ENCODE measurements at regions of chr1 and their contacts with region 1.

Region 1: GRCh38 chr1:228734881-228735801 is at the start of gene RHOU:
- DNase-seq: peak; percentile 70 to 83
- ATAC-seq: peak; percentile 86 to 96 (median 91)
- H3K4me3 ChIP-seq: peak within 1 kb of the TSS; percentile 62 to 91 (median 88)
- H3K27ac ChIP-seq: peak within 1 kb of the TSS; percentile 22 to 97 (median 90)
- H3K4me1 ChIP-seq: peaks cover 0 to 45% (median 14%) of the 10 kb centered on the region in 9 donors
- H3K27me3 ChIP-seq: peaks cover 0 to 12% (median 0%) of the 10 kb centered on the region in 7 donors
- CTCF ChIP-seq: peak; percentile 59 to 98 (median 86)
- total RNA-seq, gene RHOU: 1.00 to 10.8 (median 3.2) TPM

Region 2: GRCh38 chr1:228684607-228685006 is 50.5 kb before region 1 on chr1:
- intact Hi-C with region 1: no loop called
- DNase-seq: peak in 1 of 2 donors; percentile 11
- ATAC-seq: peak in 6 of 8 donors; percentile 6 to 78 (median 42)
- H3K4me3 ChIP-seq: no peak overlapping the region
- H3K27ac ChIP-seq: peak overlapping the region in 5 of 10 donors; percentile 13 to 65 (median 31)
- H3K4me1 ChIP-seq: peaks cover 0 to 14% (median 11%) of the 10 kb centered on the region in 9 donors
- H3K27me3 ChIP-seq: peaks cover 0 to 12% (median 0%) of the 10 kb centered on the region in 7 donors
- CTCF ChIP-seq: no peak

Region 3: GRCh38 chr1:228842094-228842775 is 107.1 kb after region 1 on chr1:
- intact Hi-C with region 1: loop called in 1 of 10 experiments (anchors 10 kb)
- DNase-seq: peak in 1 of 2 donors; percentile 20
- ATAC-seq: peak in 5 of 8 donors; percentile 56 to 94 (median 84)
- H3K4me3 ChIP-seq: no peak overlapping the region
- H3K27ac ChIP-seq: no peak overlapping the region
- H3K4me1 ChIP-seq: peaks cover 0 to 25% (median 10%) of the 10 kb centered on the region in 9 donors
- H3K27me3 ChIP-seq: no peaks in the 10 kb centered on the region
- CTCF ChIP-seq: no peak

Region 4: GRCh38 chr1:229068270-229068987 is 333.3 kb after region 1 on chr1:
- intact Hi-C with region 1: loop called in 1 of 10 experiments (anchors 5 kb)
- DNase-seq: peak in 1 of 2 donors; percentile 41
- ATAC-seq: peak; percentile 32 to 82 (median 56)
- H3K4me3 ChIP-seq: no peak overlapping the region
- H3K27ac ChIP-seq: peak overlapping the region in 4 of 10 donors; percentile 15 to 78 (median 20)
- H3K4me1 ChIP-seq: peaks cover 0 to 76% (median 8%) of the 10 kb centered on the region in 9 donors
- H3K27me3 ChIP-seq: peaks cover 0 to 9% (median 0%) of the 10 kb centered on the region in 7 donors
- CTCF ChIP-seq: no peak

Region 5: GRCh38 chr1:229164836-229165735 is 429.9 kb after region 1 on chr1:
- intact Hi-C with region 1: loop called in 1 of 10 experiments (anchors 10 kb)
- DNase-seq: no peak
- ATAC-seq: peak in 1 of 8 donors; percentile 15
- H3K4me3 ChIP-seq: no peak overlapping the region
- H3K27ac ChIP-seq: peak overlapping the region in 1 of 10 donors; percentile 40
- H3K4me1 ChIP-seq: peaks cover 0 to 15% (median 0%) of the 10 kb centered on the region in 9 donors
- H3K27me3 ChIP-seq: peaks cover 0 to 25% (median 0%) of the 10 kb centered on the region in 7 donors
- CTCF ChIP-seq: no peak